ENCODE measurements at regions of chr11 and their contacts with region 1.

Region 1: GRCh38 chr11:110195845-110196754 is 100.3 kb downstream of the RDX start:
- DNase-seq: no peak

Region 2: GRCh38 chr11:109435121-109435742 is 760.9 kb before region 1 on chr11:
- intact Hi-C with region 1: no loop called
- DNase-seq: peak in 1 of 10 donors; percentile 10

Region 3: DNA sequence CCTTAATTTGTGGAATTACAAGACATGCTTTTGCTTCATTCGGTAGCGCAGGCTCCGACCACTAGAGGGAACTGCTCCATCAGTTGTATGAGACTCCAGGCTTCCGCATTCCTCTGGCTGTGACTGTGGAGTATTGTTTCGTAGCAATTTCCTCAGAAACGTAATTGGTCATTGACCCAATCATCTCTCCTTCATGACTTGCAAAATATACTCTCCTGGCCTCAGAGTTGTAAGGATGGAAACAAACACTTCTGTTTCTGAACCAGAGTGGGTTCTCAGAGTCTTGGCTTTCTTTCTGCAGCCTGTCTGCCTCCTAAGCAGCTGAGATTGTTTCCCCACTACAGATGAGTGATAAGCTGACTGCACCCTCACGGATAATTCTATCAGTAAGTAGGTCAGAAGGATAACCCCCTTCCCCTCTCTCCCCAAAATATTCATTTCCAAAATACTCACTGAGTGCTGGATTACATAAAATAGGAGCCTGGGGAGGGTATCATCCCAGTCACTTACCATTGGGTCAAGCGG is 249.7 kb before region 1 on chr11:
- intact Hi-C with region 1: loop called (anchors 5 kb)
- DNase-seq: peak; percentile 59 to 97 (median 85)

Region 4: DNA sequence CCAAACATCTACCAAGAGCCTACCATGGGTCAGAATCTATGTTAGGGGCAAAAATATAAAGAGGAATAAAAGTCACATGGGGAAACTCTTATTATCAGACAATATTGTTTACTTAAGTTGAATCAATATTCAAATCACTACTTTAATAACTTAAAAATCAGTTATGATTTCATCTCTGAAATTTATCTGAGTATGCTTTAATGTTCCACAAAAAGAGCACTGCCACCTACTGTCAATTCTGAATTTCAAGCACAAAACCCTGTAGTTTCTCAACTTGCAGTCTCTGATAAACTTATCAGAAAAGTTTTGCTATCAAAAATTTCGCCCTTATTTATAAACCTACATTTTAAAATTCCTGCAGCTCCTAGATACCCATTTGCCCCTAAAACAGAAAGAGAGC is 53.0 kb after region 1 on chr11:
- intact Hi-C with region 1: loop called (anchors 10 kb)
- DNase-seq: no peak

Region 5: GRCh38 chr11:110296226-110297075 is 100.4 kb after region 1 on chr11 and contains the start of gene RDX:
- intact Hi-C with region 1: loop called (anchors 5 kb)
- DNase-seq: peak; percentile 47 to 95 (median 66)

Region 6: DNA sequence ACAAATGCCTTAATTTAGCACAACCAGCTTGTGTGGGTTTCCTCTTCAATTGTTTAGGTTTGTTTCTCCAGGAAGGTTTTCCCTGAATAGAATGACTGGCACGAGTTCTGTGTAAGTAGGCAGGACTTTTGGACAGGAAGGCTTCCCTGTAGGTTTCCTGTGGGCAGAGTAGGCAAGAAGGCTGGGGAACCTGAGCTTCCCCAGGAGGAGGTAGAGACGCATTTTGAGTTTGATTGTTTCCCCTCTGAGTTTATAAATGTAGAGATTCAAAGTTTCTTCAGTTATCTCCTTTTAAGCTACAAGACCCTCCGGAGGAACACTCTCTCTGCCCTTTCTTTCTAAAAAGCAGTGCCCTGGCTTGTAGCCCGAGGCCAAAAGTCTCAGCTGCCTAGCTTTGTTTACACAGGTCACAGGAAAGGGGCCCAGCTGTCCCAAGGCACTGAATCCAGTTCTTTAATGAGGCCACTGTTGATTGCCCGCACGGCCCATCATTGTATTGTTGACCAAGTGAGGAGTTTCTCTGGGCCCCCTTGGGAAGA is 166.9 kb after region 1 on chr11:
- intact Hi-C with region 1: loop called (anchors 1 kb)
- DNase-seq: peak in 3 of 10 donors; percentile 26 to 82 (median 49)

Region 7: DNA sequence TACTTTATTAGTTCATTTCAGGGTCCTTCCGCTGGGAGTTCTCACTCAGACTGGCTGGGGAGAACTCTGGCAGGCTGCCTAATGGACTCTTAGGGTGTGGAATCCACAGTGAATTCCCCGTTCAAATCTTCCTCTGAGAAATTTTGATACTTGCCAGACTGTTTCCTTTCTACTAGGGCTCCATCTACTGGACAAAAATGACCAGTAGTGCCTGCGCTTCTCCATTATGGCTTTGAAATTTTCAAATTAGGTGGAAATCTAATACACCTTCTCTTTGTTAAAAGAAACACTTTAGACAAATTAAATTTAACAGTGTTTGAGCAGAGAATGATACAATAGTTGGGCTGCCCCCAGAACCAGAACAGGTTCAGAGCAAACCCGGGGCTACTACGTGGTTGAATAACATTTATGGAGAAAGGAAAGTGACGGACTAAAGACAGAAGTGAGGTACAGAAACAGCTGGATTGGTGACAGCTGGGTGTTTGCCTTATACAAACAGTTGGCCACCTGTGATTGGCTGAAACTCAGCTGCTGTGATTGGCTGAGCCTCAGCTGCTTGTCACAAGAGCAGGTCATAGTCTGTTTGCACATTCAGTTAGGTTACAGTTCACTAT is 180.7 kb after region 1 on chr11:
- intact Hi-C with region 1: loop called (anchors 2 kb)
- DNase-seq: peak in 4 of 10 donors; percentile 17 to 61 (median 26)

Region 8: GRCh38 chr11:110429731-110430266 is 233.7 kb after region 1 on chr11 and contains the start of gene FDX1:
- intact Hi-C with region 1: loop called (anchors 2 kb)
- DNase-seq: peak; percentile 63 to 96 (median 76)